Transverse colon (tissue), 4 donors: ENCODE measurements at regions of chr4 and their contacts with region 1.

Region 1: DNA sequence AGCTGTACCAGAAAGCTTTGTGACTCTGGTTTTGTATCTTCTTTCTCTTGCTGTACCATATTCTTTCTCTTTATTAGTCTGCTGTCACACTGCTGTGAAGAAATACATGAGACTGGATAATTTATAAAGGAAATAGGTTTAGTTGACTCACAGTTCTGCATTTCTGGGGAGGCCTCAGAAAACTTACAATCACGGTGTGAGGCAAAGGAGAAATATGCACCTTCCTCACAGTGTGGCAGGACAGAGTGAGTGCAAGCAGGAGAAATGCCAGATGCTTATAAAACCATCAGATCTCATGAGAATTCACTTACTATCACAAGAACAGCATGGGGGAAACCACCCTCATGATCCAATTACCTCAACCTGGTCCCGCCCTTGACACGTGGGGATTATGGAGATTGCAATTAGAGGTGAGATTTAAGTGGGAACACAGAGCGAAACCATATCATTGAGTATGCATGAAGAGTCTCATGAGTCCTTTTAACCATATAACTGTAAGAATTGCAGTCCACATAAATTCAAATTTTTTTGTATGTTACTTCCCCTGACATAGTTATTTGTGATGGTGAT is 67.4 kb upstream of the INPP4B start:
- DNase-seq: no peak
- H3K4me3 ChIP-seq: no peak overlapping the region
- H3K27ac ChIP-seq: peak overlapping the region in 1 of 4 donors; percentile 37
- H3K4me1 ChIP-seq: peaks cover 0 to 4% (median 2%) of the 10 kb centered on the region in 4 donors
- H3K27me3 ChIP-seq: no peaks in the 10 kb centered on the region
- CTCF ChIP-seq: no peak
- EP300 ChIP-seq: no peak
- POLR2A ChIP-seq: no peak

Region 2: GRCh38 chr4:142875117-142875516 is 38.4 kb before region 1 on chr4:
- in situ Hi-C with region 1: no loop called
- intact Hi-C with region 1: no loop called
- DNase-seq: no peak
- H3K4me3 ChIP-seq: no peak overlapping the region
- H3K27ac ChIP-seq: no peak overlapping the region
- H3K4me1 ChIP-seq: no peaks in the 10 kb centered on the region
- H3K27me3 ChIP-seq: no peaks in the 10 kb centered on the region
- CTCF ChIP-seq: no peak
- EP300 ChIP-seq: no peak
- POLR2A ChIP-seq: no peak

Region 3: GRCh38 chr4:143346206-143346605 is 432.7 kb after region 1 on chr4:
- in situ Hi-C with region 1: no loop called
- intact Hi-C with region 1: loop called (anchors 10 kb)
- DNase-seq: no peak
- H3K4me3 ChIP-seq: no peak overlapping the region
- H3K27ac ChIP-seq: peak overlapping the region in 3 of 4 donors; percentile 8 to 25 (median 17)
- H3K4me1 ChIP-seq: peaks cover 14 to 42% (median 27%) of the 10 kb centered on the region in 4 donors
- H3K27me3 ChIP-seq: no peaks in the 10 kb centered on the region
- CTCF ChIP-seq: no peak
- EP300 ChIP-seq: no peak
- POLR2A ChIP-seq: no peak